ENCODE measurements at regions of chr5 and their contacts with region 1.

Region 1: DNA sequence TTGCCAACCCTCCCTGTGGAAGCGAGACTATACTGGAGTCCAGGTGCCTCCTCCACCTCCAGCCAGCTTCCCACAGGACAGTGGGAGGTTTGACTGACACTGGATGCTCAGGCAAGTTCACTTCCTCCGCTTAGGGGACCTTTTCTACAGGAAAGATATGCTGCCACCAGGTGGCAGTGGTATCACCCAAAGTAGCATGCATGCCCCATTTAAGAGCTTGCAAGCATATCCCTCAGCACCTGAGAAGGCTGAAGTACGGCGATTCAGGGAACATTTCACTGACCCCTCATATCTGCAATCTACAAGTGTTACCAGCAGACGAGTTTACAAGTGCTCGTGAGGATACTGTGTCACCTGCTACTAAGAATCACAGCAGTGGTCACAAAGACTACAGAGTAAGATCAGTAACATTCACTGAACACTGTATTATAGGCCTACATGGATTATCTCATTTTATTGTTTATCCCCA is 75.5 kb downstream of the KLHL3 start:
- DNase-seq: peak; percentile 68 to 79
- H3K4me3 ChIP-seq: no peak overlapping the region
- H3K27ac ChIP-seq: no peak overlapping the region
- H3K4me1 ChIP-seq: peaks cover 0 to 3% (median 0%) of the 10 kb centered on the region in 4 experiments; a peak in 1 of 7 replicates
- H3K27me3 ChIP-seq: no peaks in the 10 kb centered on the region
- CTCF ChIP-seq: peak; percentile 54 to 86 (median 83)
- EP300 ChIP-seq: no peak
- POLR2A ChIP-seq: no peak
- RAD21 ChIP-seq: peak; percentile 84 to 86

Region 2: GRCh38 chr5:137470111-137470920 is 190.1 kb before region 1 on chr5:
- CTCF ChIA-PET with region 1: no interaction called
- POLR2A ChIA-PET with region 1: no interaction called
- DNase-seq: no peak
- H3K4me3 ChIP-seq: no peak overlapping the region
- H3K27ac ChIP-seq: no peak overlapping the region
- H3K4me1 ChIP-seq: no peaks in the 10 kb centered on the region
- H3K27me3 ChIP-seq: no peaks in the 10 kb centered on the region
- CTCF ChIP-seq: no peak
- EP300 ChIP-seq: no peak
- POLR2A ChIP-seq: no peak
- RAD21 ChIP-seq: no peak

Region 3: DNA sequence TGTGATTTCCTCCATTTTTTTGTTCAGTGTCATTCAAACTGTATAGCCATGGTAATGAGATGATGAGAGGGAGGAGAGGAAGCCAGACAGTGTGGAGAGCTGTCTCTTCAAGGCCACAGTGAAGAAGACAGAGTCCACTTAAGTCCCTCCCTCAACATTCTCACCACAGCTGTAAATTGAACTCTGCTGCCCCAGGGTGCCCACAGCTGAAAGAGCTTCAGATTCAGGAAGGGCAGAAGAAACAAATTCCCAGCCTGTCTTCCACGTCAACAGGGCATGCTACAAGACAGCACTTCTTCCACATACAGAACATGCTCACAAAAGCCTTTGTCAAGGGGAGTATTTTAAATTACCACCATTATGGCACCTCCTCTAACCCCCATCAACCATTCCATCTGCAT is 24.9 kb before region 1 on chr5:
- CTCF ChIA-PET with region 1: interaction called, 13 read pairs
- POLR2A ChIA-PET with region 1: no interaction called
- DNase-seq: no peak
- H3K4me3 ChIP-seq: no peak overlapping the region
- H3K27ac ChIP-seq: no peak overlapping the region
- H3K4me1 ChIP-seq: no peaks in the 10 kb centered on the region
- H3K27me3 ChIP-seq: no peaks in the 10 kb centered on the region
- CTCF ChIP-seq: no peak
- EP300 ChIP-seq: no peak
- POLR2A ChIP-seq: no peak
- RAD21 ChIP-seq: no peak

Region 4: DNA sequence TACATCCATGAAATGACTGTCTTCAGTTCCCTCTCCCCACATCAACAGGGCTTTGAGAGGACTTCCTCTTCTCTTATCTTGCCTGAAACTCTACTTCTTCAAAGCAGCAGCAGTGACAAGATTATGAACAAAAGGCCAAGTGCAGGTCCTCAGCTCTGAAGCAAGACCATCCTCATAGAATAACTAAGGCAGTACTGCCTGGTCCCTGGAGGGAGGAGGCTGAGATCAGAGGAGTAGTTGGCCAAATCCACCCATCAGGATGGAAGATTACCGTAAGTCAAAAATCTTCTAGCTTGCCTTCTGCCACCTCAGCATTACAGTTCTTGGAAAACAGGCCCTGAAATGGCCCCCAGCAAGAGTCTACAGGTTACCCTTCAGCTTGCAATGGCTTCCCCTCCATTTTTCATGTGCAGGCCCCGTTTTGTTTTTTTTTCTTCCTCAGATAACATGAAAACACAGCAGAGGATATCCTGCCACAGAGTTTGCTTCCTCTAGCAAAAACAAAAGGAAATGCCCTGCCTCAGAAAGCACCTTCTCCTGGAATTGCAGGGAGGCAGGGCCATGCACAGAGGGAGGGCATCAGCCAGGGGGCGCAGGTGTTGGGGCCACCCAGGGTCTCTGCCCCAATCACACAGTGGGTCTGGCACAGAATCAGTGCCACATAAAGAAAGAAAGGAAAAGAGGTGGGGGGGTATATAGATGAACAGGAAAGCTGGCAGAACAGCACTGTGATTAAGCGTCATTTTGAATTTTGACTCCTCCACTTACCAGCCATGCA is 35.5 kb after region 1 on chr5:
- CTCF ChIA-PET with region 1: interaction called, 15 read pairs
- POLR2A ChIA-PET with region 1: no interaction called
- DNase-seq: peak in 1 of 2 experiments; percentile 48
- H3K4me3 ChIP-seq: no peak overlapping the region
- H3K27ac ChIP-seq: no peak overlapping the region
- H3K4me1 ChIP-seq: peaks cover 0 to 2% (median 0%) of the 10 kb centered on the region in 4 experiments; a peak in 3 of 7 replicates
- H3K27me3 ChIP-seq: no peaks in the 10 kb centered on the region
- CTCF ChIP-seq: peak; percentile 17 to 49 (median 33); a peak in 2 of 4 replicates
- EP300 ChIP-seq: no peak
- POLR2A ChIP-seq: no peak
- RAD21 ChIP-seq: no peak; a peak in 1 of 4 replicates

Region 5: DNA sequence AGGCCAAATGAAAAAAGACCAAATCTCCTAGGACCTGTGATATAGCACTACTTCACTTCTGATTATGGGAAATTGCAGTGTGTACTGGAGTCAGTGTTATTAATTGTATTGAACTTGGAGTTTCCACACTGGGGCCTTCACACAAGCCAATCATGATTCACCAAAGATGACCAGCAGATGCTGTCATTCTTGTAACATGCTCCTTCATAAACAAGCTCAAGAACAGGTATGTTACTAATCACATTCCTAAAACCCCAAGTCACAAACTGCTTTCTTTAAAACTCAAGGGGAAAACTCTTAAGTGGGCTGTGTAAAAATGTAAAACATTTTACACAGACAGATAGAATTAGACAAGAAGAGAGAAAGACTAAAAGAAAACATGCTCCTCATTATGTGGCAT is 70.0 kb after region 1 on chr5:
- CTCF ChIA-PET with region 1: interaction called, 37 read pairs
- POLR2A ChIA-PET with region 1: interaction called, 3 read pairs
- DNase-seq: no peak
- H3K4me3 ChIP-seq: no peak overlapping the region
- H3K27ac ChIP-seq: no peak overlapping the region
- H3K4me1 ChIP-seq: peaks cover 0 to 8% (median 4%) of the 10 kb centered on the region in 4 experiments; a peak in 5 of 7 replicates
- H3K27me3 ChIP-seq: no peaks in the 10 kb centered on the region
- CTCF ChIP-seq: no peak
- EP300 ChIP-seq: no peak
- POLR2A ChIP-seq: no peak
- RAD21 ChIP-seq: no peak

Region 6: DNA sequence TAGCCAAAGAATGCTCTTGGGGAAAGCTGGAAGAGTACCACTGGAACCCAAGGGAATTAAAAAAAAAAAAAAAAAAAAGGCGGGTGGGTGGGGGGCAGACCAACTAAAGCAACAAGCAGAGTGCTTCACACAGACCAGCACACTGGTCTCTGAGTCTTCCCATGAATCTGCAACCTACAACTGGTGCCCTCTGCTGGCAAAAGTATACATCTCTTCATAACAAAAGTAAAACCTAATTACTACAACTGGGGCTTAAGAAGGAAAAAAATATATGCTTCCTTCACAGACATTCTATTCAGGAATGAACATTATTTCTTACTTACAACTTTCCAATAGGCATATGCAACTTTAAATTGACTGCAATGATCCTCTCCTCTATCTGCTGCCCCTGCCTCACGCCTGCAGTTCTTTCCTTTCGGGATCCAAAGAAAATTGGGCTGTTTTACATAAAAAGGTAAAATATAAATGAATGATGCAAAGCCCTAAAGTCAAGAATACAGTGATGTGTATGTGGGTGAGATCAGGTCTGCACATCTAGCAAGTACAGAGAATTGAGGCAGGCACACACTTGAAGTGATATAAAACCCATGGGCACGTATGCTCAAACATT is 82.8 kb after region 1 on chr5:
- CTCF ChIA-PET with region 1: interaction called, 103 read pairs
- POLR2A ChIA-PET with region 1: no interaction called
- DNase-seq: peak in 1 of 2 experiments; percentile 49
- H3K4me3 ChIP-seq: no peak overlapping the region
- H3K27ac ChIP-seq: no peak overlapping the region
- H3K4me1 ChIP-seq: no peaks in the 10 kb centered on the region
- H3K27me3 ChIP-seq: peaks cover 0 to 1% (median 0%) of the 10 kb centered on the region in 4 experiments; a peak in 1 of 7 replicates
- CTCF ChIP-seq: peak; percentile 25 to 70 (median 58)
- EP300 ChIP-seq: no peak
- POLR2A ChIP-seq: no peak
- RAD21 ChIP-seq: peak; percentile 66 to 69

Measured in H1 (cell line).